Dorsolateral prefrontal cortex (tissue), 120 donors: ENCODE measurements at regions of chr1 and their contacts with region 1.

Region 1: DNA sequence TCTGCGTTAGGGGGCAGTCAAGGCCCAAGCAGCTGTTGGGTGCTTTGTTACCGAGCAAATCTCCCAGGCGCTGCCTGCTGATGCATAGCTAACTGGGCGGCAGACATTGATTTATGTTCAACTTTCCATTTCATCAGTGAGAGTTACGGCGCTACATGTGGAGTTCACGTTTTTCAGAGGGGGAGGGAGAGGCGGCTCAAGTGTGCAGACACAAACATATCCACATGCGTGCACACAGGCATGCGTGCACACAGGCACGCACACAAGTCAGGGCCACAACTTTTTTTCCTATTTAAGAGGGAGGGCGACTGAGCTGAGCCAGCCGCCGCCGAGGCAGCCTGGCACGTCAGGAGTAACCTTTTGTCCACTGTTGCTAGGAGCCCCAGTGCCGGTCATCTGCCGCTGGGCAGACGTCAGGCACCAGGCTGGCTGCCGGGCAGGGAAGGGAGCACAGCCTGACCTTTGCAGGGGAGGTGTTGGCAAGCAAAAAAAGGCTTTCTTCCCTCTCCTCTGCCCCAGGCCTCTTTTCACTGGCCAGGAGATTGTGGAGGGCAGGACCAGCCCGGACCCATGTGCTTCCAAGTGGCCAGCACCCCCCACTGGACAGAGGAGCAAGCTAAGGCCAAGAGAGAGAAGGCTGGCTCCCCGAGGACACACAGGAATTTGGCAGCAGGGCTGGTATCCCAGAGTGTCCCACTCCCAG is 73.3 kb downstream of the MRPL37 start:
- DNase-seq: peak; percentile 54 to 89 (median 80)
- H3K4me3 ChIP-seq: peak overlapping the region in 52 of 59 donors; percentile 1 to 51 (median 30)
- H3K27ac ChIP-seq: peak overlapping the region; percentile 30 to 92 (median 81)
- H3K27me3 ChIP-seq: no peaks in the 10 kb centered on the region
- CTCF ChIP-seq: peak in 50 of 56 donors; percentile 0 to 82 (median 64)

Region 2: GRCh38 chr1:54310439-54311328 is 37.4 kb after region 1 on chr1:
- intact Hi-C with region 1: loop called in 1 of 2 experiments (anchors 5 kb)
- DNase-seq: peak in 1 of 10 donors; percentile 67
- H3K4me3 ChIP-seq: no peak overlapping the region
- H3K27ac ChIP-seq: peak overlapping the region in 17 of 59 donors; percentile 2 to 82 (median 57)
- H3K27me3 ChIP-seq: no peaks in the 10 kb centered on the region
- CTCF ChIP-seq: peak; percentile 21 to 77 (median 58)

Region 3: GRCh38 chr1:54331091-54331772 is 58.0 kb after region 1 on chr1:
- intact Hi-C with region 1: no loop called
- DNase-seq: no peak
- H3K4me3 ChIP-seq: no peak overlapping the region
- H3K27ac ChIP-seq: peak overlapping the region in 58 of 59 donors; percentile 12 to 97 (median 86)
- H3K27me3 ChIP-seq: no peaks in the 10 kb centered on the region
- CTCF ChIP-seq: no peak

Region 4: DNA sequence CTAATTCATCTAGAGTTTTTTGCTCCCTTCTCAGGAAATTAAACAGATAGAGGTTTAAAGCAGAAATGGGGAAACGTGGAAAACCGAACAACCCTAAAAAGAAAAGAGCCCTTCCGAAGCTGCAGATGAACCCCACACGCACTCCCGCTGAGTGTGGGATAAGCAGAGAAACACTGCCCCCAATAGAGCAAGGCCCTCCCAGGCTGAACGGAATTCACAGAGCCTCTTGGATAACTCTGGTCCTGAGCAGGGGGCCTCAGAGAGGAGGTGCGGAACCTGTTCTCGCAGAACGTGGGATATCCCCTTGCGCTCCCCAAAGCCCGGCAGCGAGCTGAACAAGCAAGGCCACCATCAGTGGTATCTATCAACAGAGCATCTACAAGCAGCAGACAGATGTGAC is 88.1 kb after region 1 on chr1:
- intact Hi-C with region 1: loop called (anchors 2 to 10 kb)
- DNase-seq: peak in 6 of 10 donors; percentile 58 to 73 (median 64)
- H3K4me3 ChIP-seq: no peak overlapping the region
- H3K27ac ChIP-seq: peak overlapping the region in 28 of 59 donors; percentile 3 to 92 (median 46)
- H3K27me3 ChIP-seq: no peaks in the 10 kb centered on the region
- CTCF ChIP-seq: peak in 53 of 56 donors; percentile 26 to 80 (median 52)